Activated B cell treated with CpG ODN at 0.5 μM for 24 hours (primary cell): ENCODE measurements at regions of chr17 and their contacts with region 1.

Region 1: GRCh38 chr17:42183741-42184711 is 1.2 kb downstream of the HCRT start:
- DNase-seq: peak; percentile 87
- ATAC-seq: peak; percentile 64
- H3K4me3 Mint-ChIP-seq: peak overlapping the region; percentile 93
- H3K27ac Mint-ChIP-seq: peak overlapping the region; percentile 95
- H3K4me1 Mint-ChIP-seq: peaks cover 56% of the 10 kb centered on the region
- H3K27me3 Mint-ChIP-seq: no peaks in the 10 kb centered on the region
- CTCF ChIP-seq: peak; percentile 33

Region 2: GRCh38 chr17:42067351-42068091 is 116.5 kb before region 1 on chr17:
- CTCF ChIA-PET with region 1: interaction called, 3 read pairs
- POLR2A ChIA-PET with region 1: no interaction called
- intact Hi-C with region 1: loop called (anchors 1 kb)
- DNase-seq: peak; percentile 66
- ATAC-seq: peak; percentile 70
- H3K4me3 Mint-ChIP-seq: no peak overlapping the region
- H3K27ac Mint-ChIP-seq: no peak overlapping the region
- H3K4me1 Mint-ChIP-seq: peaks cover 28% of the 10 kb centered on the region
- H3K27me3 Mint-ChIP-seq: peaks cover 8% of the 10 kb centered on the region
- CTCF ChIP-seq: no peak

Region 3: DNA sequence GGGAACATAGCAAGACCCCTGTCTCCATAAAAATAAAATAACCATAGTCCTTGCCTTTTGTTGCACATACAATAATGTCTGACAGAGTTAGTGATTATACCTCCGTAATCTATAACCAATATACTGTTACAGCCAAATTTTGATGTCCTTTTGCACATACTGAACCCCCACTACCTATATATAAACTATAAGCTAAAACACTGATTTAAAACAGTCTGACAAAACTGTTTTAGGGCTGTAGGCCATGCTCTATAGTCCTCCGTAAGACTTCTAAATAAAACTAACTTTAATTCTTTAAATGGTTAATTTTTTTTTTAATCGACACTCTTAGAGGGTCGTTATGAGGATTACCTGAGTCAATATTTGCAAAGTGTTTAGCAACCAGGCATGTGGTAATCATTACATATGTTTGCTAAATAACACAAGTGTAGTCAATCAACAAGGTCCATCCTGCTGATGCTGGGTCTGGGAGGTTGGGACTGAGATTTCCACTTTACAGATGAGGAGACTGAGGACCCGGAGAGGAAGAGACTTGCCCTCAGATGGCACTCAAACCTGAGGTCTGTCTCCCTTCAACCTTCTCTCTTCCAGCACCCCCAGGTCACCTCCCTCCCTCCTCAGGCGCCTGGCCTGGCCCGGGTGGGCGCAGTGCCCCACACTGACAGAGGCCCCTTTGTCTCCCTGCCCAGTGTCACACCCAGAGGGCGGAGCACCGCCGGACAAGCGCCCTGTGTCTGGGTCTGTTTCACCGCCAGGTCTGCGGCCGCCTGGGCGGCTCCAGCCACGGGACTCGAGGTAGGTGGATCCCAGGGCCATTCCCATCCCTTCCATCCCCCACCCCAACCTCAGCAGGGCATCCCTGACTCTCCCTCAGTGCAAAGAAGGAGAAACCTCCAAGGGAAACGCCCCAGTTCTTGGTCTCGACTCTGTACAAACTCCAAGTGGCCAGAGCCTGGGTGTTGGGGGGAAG is 96.0 kb before region 1 on chr17:
- CTCF ChIA-PET with region 1: no interaction called
- POLR2A ChIA-PET with region 1: no interaction called
- intact Hi-C with region 1: no loop called
- DNase-seq: no peak
- ATAC-seq: no peak
- H3K4me3 Mint-ChIP-seq: no peak overlapping the region
- H3K27ac Mint-ChIP-seq: no peak overlapping the region
- H3K4me1 Mint-ChIP-seq: no peaks in the 10 kb centered on the region
- H3K27me3 Mint-ChIP-seq: peaks cover 5% of the 10 kb centered on the region
- CTCF ChIP-seq: no peak

Region 4: GRCh38 chr17:42120770-42121769 is 63.0 kb before region 1 on chr17 and contains the start of gene KAT2A:
- CTCF ChIA-PET with region 1: interaction called, 18 read pairs
- POLR2A ChIA-PET with region 1: interaction called, 5 read pairs
- intact Hi-C with region 1: loop called (anchors 1 kb)
- DNase-seq: peak; percentile 76
- ATAC-seq: peak; percentile 89
- H3K4me3 Mint-ChIP-seq: peak within 1 kb of the TSS; percentile 71
- H3K27ac Mint-ChIP-seq: peak within 1 kb of the TSS; percentile 30
- H3K4me1 Mint-ChIP-seq: peaks cover 32% of the 10 kb centered on the region
- H3K27me3 Mint-ChIP-seq: no peaks in the 10 kb centered on the region
- CTCF ChIP-seq: no peak
- total RNA-seq, gene KAT2A: 33.4 and 40.1 TPM in 2 replicates

Region 5: GRCh38 chr17:42155636-42156045 is 28.4 kb before region 1 on chr17:
- CTCF ChIA-PET with region 1: interaction called, 4 read pairs
- POLR2A ChIA-PET with region 1: interaction called, 9 read pairs
- intact Hi-C with region 1: loop called (anchors 1 kb)
- DNase-seq: no peak
- ATAC-seq: no peak
- H3K4me3 Mint-ChIP-seq: peak overlapping the region; percentile 95
- H3K27ac Mint-ChIP-seq: peak overlapping the region; percentile 92
- H3K4me1 Mint-ChIP-seq: peaks cover 37% of the 10 kb centered on the region
- H3K27me3 Mint-ChIP-seq: no peaks in the 10 kb centered on the region
- CTCF ChIP-seq: no peak

Region 6: GRCh38 chr17:42193969-42194899 is 10.2 kb after region 1 on chr17 and contains the start of gene GHDC:
- CTCF ChIA-PET with region 1: interaction called, 11 read pairs
- POLR2A ChIA-PET with region 1: interaction called, 38 read pairs
- intact Hi-C with region 1: loop called (anchors 1 kb)
- DNase-seq: peak; percentile 74
- ATAC-seq: peak; percentile 90
- H3K4me3 Mint-ChIP-seq: peak within 1 kb of the TSS; percentile 98
- H3K27ac Mint-ChIP-seq: peak within 1 kb of the TSS; percentile 96
- H3K4me1 Mint-ChIP-seq: peaks cover 33% of the 10 kb centered on the region
- H3K27me3 Mint-ChIP-seq: no peaks in the 10 kb centered on the region
- CTCF ChIP-seq: no peak
- total RNA-seq, gene GHDC: 26.5 and 29.1 TPM in 2 replicates

Region 7: DNA sequence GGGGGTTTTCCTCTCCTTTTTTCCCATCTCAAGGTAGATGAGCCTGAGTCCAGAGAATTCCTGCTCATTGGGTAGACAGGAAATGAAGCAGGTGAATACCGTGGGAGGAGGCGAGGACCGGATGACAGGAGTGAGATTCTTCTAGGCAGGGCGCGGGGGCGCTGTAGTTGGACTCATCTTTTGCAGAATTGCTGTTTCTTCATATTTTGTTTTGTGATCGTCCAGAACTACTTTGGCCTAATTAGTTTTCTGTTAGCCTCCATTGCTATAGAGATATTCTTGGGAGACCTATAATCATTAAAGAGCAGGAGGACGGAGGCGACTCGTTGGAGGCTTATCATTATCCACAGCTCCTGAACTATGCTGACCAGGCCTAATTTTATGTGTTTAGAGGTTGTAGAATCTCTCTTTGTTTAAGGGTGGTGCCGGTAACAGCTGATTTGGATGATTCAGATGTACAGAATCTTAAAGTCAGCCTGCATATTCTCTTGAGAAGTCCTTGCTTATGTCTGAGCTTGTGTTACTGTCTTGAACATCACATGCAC is 275.3 kb after region 1 on chr17:
- CTCF ChIA-PET with region 1: no interaction called
- POLR2A ChIA-PET with region 1: no interaction called
- intact Hi-C with region 1: loop called (anchors 5 kb)
- DNase-seq: no peak
- ATAC-seq: no peak
- H3K4me3 Mint-ChIP-seq: peak overlapping the region; percentile 98
- H3K27ac Mint-ChIP-seq: peak overlapping the region; percentile 95
- H3K4me1 Mint-ChIP-seq: peaks cover 66% of the 10 kb centered on the region
- H3K27me3 Mint-ChIP-seq: no peaks in the 10 kb centered on the region
- CTCF ChIP-seq: no peak